ENCODE measurements at regions of chr2 and their contacts with region 1.

Region 1: DNA sequence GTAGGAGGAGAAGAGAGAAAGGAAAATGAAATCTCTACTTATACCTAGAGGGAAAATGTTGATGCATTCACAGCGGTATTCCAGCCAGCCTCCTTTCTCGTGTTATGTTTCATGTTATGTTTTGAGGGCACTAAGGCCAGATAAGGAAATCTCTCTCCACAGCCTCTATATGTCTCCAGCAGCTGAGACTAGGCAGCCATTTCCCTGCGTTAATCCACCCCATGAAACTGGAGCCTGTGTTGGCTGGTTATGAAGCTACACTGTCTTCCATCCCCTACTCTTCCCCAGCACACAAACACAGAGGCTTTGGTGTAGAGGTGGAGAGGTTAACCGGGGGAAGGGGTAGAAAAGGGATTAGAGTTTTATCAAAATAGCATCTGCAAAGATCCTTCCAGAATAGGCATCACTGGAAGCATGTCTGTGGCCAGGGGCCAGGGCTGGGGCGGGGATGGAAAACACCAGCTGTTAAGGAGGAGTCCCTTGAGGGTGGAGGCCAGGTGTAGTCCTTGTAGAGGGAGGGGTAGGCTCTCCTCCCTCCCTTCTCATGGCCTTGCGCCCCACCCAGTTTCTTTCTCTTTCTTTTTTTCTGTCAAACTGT is 100.9 kb upstream of the TNP1 start:
- DNase-seq: no peak
- H3K4me3 ChIP-seq: no peak overlapping the region
- H3K27ac ChIP-seq: no peak overlapping the region
- H3K4me1 ChIP-seq: no peaks in the 10 kb centered on the region
- H3K27me3 ChIP-seq: no peaks in the 10 kb centered on the region
- CTCF ChIP-seq: no peak
- EP300 ChIP-seq: no peak
- POLR2A ChIP-seq: no peak

Region 2: DNA sequence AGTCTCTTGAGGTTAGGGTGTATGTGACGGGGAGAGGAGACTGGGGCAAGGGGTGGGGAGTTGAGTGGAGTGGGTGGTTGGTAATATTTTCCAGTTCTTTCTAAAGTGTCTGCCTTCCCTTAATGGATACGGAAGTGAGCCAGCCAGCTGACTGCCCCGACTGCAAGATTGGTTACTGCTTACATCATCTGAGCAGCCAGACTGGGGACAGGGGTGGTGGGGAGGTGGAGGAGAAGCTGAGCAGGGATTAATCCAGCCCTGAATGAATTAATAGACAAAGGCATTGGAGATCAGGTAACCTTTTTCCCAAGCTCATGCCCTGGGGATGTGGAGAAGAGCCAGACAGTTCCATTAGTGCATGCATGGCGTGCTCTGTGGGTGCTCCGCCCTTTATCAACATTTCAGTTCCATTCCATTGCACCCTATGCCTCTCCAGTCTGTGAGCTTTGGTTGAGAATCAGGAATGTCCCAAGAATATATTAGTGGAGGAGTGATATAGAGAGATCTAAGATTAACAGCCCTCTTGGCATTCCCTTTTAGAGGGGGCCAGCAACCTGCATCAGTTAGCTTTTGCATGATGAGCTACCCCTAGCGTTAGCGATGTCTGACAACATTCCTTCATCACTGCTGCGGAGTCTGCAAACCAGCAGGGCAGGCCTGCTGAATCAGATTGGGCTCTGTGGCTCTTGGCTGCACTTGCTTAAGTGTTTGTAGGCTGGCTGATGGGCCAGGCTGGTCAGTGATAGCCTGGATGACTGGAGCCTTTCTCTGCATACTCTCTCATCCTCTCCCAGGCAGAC is 168.3 kb before region 1 on chr2:
- intact Hi-C with region 1: loop called (anchors 10 kb)
- DNase-seq: no peak
- H3K4me3 ChIP-seq: no peak overlapping the region
- H3K27ac ChIP-seq: peak overlapping the region in 2 of 4 donors; percentile 38 to 42
- H3K4me1 ChIP-seq: peaks cover 3 to 35% (median 15%) of the 10 kb centered on the region in 4 donors
- H3K27me3 ChIP-seq: no peaks in the 10 kb centered on the region
- CTCF ChIP-seq: no peak
- EP300 ChIP-seq: no peak
- POLR2A ChIP-seq: no peak

Measured in esophagus muscularis mucosa (tissue), 4 donors.